ENCODE measurements at regions of chr11 and their contacts with region 1.

Region 1: DNA sequence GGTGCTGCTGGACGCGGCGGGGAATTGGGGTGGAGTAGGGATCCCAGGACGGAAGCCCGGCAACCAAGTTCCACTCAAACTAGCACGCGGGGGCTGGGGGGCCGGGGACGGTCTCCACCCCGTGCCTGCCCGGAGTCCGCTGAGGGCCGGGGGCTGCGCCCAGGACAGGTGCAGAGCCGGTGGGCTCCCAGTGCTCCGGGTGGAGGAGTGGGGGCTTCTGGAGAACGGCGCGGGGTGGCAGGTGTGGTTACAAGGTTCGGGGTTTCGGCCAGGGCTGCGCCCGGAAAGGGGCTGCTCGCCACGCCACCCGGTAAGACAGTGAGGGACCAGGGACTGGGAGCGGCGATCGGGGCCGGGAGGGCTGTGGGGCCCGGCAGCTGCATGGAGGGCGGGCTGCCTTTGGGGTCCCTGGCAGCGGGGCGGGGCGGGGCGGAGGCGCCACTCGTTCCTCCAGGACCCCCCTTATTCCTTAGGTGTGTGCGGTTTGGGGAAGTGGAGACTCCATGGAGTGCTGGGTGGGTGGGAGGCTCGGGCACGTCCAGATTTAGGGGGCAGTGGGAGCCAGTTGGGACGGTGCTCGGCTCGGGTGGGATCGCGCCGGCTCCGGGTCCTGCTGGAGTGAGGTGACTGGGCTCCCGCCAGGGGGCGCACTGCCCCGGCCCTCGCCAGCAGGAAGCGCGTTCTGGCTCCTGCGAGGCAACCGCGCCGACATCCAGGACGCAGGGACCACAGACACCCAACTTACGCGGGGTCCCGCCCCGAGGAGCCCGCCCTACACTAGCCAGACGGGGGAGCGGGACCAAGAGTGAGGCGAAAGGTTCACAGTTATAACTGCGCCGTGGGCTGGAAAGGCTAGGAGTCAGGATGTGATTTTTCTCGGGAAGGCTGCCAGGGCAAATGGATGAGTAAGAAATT is 868 bp downstream of the TSPAN18 start:
- DNase-seq: peak; percentile 94
- CTCF ChIP-seq: peak; percentile 97

Region 2: GRCh38 chr11:44893846-44894617 is 166.4 kb after region 1 on chr11:
- in situ Hi-C with region 1: loop called (anchors 25 kb)
- DNase-seq: peak; percentile 76
- CTCF ChIP-seq: peak; percentile 88